OCI-LY7 (cell line): ENCODE measurements at regions of chr4 and their contacts with region 1.

Region 1: DNA sequence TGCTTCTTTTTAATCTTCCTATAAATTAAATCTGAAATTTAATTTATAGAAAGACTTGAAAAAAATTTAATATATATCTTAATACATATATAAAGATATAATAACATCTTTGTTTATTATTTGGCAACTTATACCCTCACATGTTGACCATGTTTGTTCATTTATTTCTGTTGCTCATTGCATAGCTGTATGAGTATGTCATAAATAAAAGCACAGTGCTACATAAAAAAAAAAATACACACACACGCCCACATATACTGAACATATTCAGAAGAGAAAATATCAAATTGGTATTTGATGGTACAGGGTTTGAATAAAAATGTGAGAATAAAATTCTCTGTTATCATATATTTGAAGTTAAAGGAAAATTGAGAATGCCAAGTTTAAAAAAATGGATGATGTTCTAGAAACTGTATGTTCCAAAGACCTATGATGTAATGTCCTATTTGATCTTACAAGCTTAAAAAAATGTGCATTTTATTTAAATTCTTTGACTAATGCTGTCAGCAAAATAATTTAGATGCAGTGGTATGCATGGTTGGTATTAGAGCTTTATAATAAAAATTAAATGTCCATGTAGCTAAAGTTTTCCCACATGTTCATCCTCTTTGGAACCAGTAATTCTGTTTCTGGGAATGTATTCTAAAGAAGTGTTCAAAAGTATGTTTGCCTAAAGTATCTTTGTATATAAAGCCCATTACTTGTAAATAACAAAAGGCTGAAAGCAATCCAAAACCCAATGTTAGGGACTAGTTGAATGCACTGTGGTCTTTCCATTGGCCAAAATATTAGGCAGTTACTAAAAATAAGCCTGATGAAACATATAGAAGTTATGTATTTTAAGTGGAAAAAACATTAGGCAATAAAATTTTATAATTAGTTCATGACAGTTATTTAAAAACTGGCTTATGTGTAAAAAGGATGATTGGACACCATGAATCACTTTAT is 12.9 kb downstream of the TMEM184C start:
- DNase-seq: no peak
- H3K4me3 ChIP-seq: no peak overlapping the region
- H3K27ac ChIP-seq: no peak overlapping the region
- H3K4me1 ChIP-seq: no peaks in the 10 kb centered on the region
- CTCF ChIP-seq: no peak

Region 2: GRCh38 chr4:146477054-146477453 is 1153.0 kb before region 1 on chr4:
- CTCF ChIA-PET with region 1: no interaction called
- POLR2A ChIA-PET with region 1: no interaction called
- intact Hi-C with region 1: no loop called
- DNase-seq: no peak
- H3K4me3 ChIP-seq: no peak overlapping the region
- H3K27ac ChIP-seq: no peak overlapping the region
- H3K4me1 ChIP-seq: no peaks in the 10 kb centered on the region
- CTCF ChIP-seq: no peak

Region 3: GRCh38 chr4:147617173-147617840 is 12.8 kb before region 1 on chr4 and contains the start of gene TMEM184C:
- CTCF ChIA-PET with region 1: no interaction called
- POLR2A ChIA-PET with region 1: interaction called, 17 read pairs
- intact Hi-C with region 1: no loop called
- DNase-seq: peak; percentile 96
- H3K4me3 ChIP-seq: peak within 1 kb of the TSS; percentile 77
- H3K27ac ChIP-seq: peak within 1 kb of the TSS; percentile 76
- H3K4me1 ChIP-seq: peaks cover 23% of the 10 kb centered on the region
- CTCF ChIP-seq: no peak
- total RNA-seq, gene TMEM184C: 15.8 and 16.4 TPM in 2 replicates